GM13976 (cell line): ENCODE measurements at regions of chr19 and their contacts with region 1.

Region 1: DNA sequence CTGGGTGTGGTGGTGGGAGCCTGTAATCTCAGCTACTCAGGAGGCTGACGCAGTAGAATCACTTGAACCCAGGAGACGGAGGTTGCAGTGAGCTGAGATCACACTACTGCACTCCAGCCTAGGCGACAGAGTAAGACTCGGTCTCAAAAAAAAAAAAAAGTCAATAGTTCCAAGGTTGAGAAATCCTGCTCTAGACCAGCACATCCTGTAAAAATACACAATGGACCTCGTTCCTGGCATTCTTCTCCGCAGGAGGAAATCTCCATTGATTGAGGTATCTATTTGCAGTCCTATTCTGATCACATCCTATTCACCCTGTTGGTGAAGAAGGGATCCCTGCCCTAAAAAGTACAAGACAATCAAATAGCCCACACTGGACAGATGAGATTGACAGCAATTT is 15.2 kb downstream of the ZFP14 start:
- DNase-seq: no peak
- CTCF ChIP-seq: no peak

Region 2: GRCh38 chr19:36139473-36140303 is 224.2 kb before region 1 on chr19 and contains the start of gene CAPNS1:
- in situ Hi-C with region 1: no loop called
- DNase-seq: peak; percentile 98
- CTCF ChIP-seq: no peak

Region 3: GRCh38 chr19:36245210-36246005 is 118.4 kb before region 1 on chr19:
- in situ Hi-C with region 1: loop called (anchors 25 kb)
- DNase-seq: peak; percentile 32
- CTCF ChIP-seq: no peak